Activated naive CD8-positive, alpha-beta T cell treated with anti-CD3 and anti-CD28 coated beads, Interleukin-2, amount 10 ng/mL, durations not matched to agents 7 days and 5 days (primary cell): ENCODE measurements at regions of chr6 and their contacts with region 1.

Region 1: GRCh38 chr6:27893059-27893835 is 18.9 kb downstream of the OR2B2 start:
- DNase-seq: peak; percentile 82
- ATAC-seq: peak; percentile 55
- H3K4me3 Mint-ChIP-seq: no peak overlapping the region
- H3K27ac Mint-ChIP-seq: no peak overlapping the region
- H3K4me1 Mint-ChIP-seq: peaks cover 43% of the 10 kb centered on the region
- H3K27me3 Mint-ChIP-seq: no peaks in the 10 kb centered on the region

Region 2: GRCh38 chr6:26031595-26032339 is 1861.5 kb before region 1 on chr6:
- POLR2A ChIA-PET with region 1: interaction called, 33 read pairs
- DNase-seq: peak; percentile 84
- ATAC-seq: peak; percentile 66
- H3K4me3 Mint-ChIP-seq: peak overlapping the region; percentile 88
- H3K27ac Mint-ChIP-seq: peak overlapping the region; percentile 98
- H3K4me1 Mint-ChIP-seq: peaks cover 66% of the 10 kb centered on the region
- H3K27me3 Mint-ChIP-seq: peaks cover 3% of the 10 kb centered on the region

Region 3: DNA sequence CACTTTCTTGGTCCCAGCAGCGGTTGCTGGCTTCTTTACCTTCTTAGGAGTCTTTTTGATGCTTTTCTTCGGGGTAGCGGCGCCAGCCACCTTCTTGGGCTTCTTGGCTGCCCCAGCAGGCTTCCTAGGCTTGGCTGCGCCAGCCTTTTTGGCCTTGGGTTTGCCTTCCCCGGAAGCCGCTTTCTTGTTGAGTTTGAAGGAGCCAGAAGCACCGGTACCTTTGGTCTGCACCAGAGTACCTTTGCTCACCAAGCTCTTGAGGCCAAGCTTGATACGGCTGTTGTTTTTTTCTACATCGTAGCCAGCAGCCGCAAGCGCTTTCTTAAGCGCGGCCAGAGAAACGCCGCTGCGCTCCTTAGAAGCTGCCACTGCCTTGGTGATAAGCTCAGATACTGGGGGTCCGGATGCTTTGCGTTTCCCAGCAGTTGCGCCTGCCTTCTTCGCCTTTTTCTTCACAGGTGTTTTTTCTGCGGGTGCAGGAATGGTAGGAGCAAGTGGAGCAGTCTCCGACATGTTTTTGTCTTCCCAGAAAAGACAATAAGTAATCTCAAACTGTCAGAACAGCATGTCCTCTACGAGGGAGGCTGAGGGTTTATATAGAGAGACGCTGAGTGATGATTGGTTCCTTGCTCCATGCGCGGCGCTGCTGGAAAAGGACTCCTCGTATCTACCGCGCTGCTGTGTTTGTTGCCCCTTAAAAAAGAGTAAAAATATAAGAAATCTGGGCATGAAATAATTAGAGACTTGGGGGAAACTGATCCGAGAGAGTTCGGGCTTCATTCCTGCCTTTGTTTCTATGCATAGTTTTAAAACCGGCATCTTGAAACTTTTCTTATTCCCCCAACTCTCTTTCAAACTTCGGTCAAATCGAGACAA is 1658.6 kb before region 1 on chr6:
- POLR2A ChIA-PET with region 1: interaction called, 20 read pairs
- DNase-seq: peak; percentile 76
- ATAC-seq: peak; percentile 59
- H3K4me3 Mint-ChIP-seq: peak overlapping the region; percentile 94
- H3K27ac Mint-ChIP-seq: peak overlapping the region; percentile 100
- H3K4me1 Mint-ChIP-seq: peaks cover 36% of the 10 kb centered on the region
- H3K27me3 Mint-ChIP-seq: no peaks in the 10 kb centered on the region

Region 4: DNA sequence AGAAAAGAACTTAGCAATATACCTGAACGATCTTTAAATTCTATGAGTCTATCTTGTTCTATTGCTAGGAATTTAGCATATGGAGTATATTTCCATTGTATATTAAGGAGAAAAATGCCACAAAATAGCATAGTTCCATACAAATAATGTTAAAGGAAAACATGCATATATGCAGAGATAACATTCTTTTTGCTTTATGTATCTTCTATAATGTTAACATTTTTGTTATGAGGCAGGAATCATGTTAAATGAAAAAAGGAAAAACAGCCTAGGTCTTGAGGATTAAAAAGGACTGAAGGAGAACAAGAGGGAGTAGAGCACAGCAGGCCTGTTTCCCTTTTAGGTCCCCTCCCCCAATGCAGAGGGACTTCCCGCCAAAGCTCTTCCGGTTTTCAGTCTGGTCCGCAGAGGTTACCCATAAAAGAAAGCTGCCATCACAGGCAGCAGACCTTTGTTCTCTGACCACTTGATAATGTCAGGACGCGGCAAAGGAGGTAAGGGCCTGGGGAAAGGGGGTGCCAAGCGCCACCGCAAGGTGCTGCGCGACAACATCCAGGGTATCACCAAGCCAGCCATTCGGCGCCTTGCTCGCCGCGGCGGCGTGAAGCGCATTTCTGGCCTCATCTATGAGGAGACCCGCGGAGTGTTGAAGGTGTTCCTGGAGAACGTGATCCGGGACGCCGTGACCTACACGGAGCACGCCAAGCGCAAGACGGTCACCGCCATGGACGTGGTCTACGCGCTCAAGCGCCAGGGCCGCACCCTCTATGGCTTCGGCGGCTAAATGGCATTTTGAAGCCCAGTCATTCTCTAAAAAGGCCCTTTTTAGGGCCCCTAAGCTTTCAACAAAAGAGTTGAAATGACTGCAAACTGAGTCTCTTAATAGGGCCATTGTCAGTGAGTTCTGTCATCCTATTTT is 754.2 kb before region 1 on chr6:
- POLR2A ChIA-PET with region 1: interaction called, 158 read pairs
- DNase-seq: peak; percentile 81
- ATAC-seq: peak; percentile 73
- H3K4me3 Mint-ChIP-seq: peak overlapping the region; percentile 95
- H3K27ac Mint-ChIP-seq: peak overlapping the region; percentile 98
- H3K4me1 Mint-ChIP-seq: peaks cover 39% of the 10 kb centered on the region
- H3K27me3 Mint-ChIP-seq: no peaks in the 10 kb centered on the region

Region 5: GRCh38 chr6:27809939-27810767 is 83.1 kb before region 1 on chr6:
- POLR2A ChIA-PET with region 1: interaction called, 925 read pairs
- DNase-seq: peak; percentile 83
- ATAC-seq: peak; percentile 38
- H3K4me3 Mint-ChIP-seq: peak overlapping the region; percentile 89
- H3K27ac Mint-ChIP-seq: peak overlapping the region; percentile 97
- H3K4me1 Mint-ChIP-seq: peaks cover 52% of the 10 kb centered on the region
- H3K27me3 Mint-ChIP-seq: no peaks in the 10 kb centered on the region

Region 6: DNA sequence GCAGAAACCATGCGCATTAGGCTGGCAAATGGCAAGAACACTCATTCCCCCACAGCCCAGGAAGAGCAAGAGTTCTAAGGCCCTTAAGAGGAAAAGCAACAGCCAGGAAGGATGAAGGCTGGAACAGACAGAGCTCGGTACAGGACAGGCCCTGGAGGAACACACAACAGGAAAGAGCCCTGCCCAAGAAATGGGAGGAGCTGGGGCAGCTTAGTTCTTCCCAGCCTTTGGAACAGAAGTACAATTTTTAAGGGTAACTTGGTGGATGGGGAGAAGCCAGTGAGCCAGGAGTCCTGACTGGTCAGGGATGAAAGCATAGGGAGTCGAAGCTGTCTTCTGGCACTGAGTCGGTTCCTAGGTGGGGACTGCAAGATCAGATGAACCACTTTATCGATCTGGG is 13.4 kb before region 1 on chr6:
- POLR2A ChIA-PET with region 1: interaction called, 2,088 read pairs
- DNase-seq: no peak
- ATAC-seq: no peak
- H3K4me3 Mint-ChIP-seq: no peak overlapping the region
- H3K27ac Mint-ChIP-seq: peak overlapping the region; percentile 54
- H3K4me1 Mint-ChIP-seq: peaks cover 4% of the 10 kb centered on the region
- H3K27me3 Mint-ChIP-seq: no peaks in the 10 kb centered on the region